ENCODE measurements at regions of chr1 and their contacts with region 1.

Region 1: GRCh38 chr1:117067533-117068370 is 7.6 kb downstream of the TTF2 start:
- DNase-seq: peak; percentile 53
- ATAC-seq: peak; percentile 95

Region 2: GRCh38 chr1:117128323-117129079 is 60.7 kb after region 1 on chr1:
- intact Hi-C with region 1: loop called (anchors 5 kb)
- DNase-seq: no peak
- ATAC-seq: peak; percentile 80

Region 3: DNA sequence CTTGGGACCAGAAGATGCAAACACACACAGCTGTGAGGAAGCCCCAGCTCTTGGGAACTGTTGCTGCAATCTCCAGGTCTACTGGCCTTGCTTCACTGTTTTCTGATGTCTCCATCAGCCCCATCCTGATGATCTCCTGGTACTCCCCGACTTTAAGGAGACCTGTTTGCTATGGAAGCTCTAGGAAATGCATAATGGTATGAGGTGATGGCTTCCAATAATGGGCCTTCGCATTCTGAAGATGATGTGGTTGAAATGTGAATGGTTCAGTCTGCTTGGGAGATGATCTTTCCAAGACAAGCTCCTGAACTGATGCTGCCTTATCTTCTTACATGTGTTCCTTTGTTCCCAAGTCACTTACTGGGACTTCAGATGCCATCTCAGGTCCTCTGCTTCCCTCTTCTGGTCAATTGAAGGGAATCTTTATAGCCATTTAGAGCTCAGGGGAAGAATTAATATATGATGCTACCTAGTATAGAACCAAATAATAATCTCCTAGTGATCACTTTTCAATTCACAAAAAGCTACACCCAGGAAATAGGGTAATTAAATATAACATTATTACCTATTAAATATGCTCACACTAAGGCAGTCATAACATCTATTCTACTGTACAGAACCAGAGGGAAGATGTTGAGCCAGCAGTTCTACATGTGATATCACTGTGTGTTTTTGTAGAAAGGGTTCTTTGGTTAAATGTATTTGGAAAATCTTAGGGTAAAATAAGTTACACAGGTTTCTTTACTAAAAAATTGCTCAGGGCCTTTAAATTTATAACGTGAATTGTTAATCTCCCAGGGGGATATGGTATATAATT is 216.9 kb after region 1 on chr1:
- intact Hi-C with region 1: loop called (anchors 2 kb)
- DNase-seq: no peak
- ATAC-seq: peak; percentile 75